IMR-90 (cell line): ENCODE measurements at regions of chr13 and their contacts with region 1.

Region 1: GRCh38 chr13:60396783-60397703 is at the start of gene TDRD3:
- DNase-seq: peak; percentile 82
- ATAC-seq: peak; percentile 65
- H3K4me3 ChIP-seq: peak within 1 kb of the TSS; percentile 81
- H3K27ac ChIP-seq: peak within 1 kb of the TSS; percentile 99
- H3K4me1 ChIP-seq: peaks cover 5% of the 10 kb centered on the region; the same call in 1 of the 2 replicates
- H3K27me3 ChIP-seq: no peaks in the 10 kb centered on the region
- CTCF ChIP-seq: peak; percentile 70
- POLR2A ChIP-seq: no peak
- RAD21 ChIP-seq: 0 out of 2 replicates have a peak, but pooled peaks have one; percentile 7
- total RNA-seq, gene TDRD3: 12.0 and 14.7 TPM in 2 replicates

Region 2: DNA sequence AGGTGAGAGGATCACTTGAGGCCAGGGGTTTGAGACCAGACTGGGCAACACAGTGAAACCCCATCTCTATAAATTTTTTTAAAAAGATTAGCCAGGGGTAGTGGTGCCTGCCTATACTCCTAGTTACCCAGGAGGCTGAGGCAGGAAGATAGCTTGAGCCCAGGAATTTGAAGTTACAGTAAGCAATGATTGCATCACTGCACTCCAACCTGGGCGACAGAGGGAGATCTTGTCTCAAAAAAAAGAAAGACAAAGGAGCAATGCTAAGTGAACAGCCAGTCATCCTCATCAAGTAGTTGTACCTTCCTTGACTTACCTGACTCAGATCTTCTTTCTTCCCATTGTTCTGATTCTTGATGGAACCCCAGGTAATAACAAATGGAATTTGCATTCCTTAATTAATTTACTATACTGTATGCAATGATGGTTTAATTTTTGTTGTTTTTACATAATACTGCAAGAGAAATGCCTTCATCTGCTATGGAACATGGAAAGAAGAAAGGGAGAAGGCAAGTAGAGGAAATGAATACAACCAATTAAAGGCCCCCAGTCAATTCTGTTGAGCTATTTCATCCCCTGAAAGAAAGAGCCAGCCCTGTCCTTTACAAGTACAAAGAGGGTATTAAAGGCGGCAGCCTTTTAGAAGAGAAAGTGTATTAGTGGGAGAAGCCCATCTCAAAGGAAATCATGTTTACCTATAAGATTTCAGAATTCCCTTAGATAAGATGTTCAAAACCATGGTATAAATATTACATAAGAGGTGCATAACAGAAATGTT is 550.0 kb before region 1 on chr13:
- CTCF ChIA-PET with region 1: no interaction called
- POLR2A ChIA-PET with region 1: interaction called, 12 read pairs
- dilution Hi-C with region 1: no loop called
- in situ Hi-C with region 1: no loop called
- intact Hi-C with region 1: no loop called
- DNase-seq: no peak
- ATAC-seq: no peak
- H3K4me3 ChIP-seq: no peak overlapping the region
- H3K27ac ChIP-seq: no peak overlapping the region
- H3K4me1 ChIP-seq: 0 out of 2 replicates have a peak, but pooled peaks cover 3% of the 10 kb centered on the region
- H3K27me3 ChIP-seq: no peaks in the 10 kb centered on the region
- CTCF ChIP-seq: no peak
- POLR2A ChIP-seq: no peak
- RAD21 ChIP-seq: no peak

Region 3: GRCh38 chr13:59924256-59924655 is 472.8 kb before region 1 on chr13:
- CTCF ChIA-PET with region 1: no interaction called
- POLR2A ChIA-PET with region 1: no interaction called
- dilution Hi-C with region 1: no loop called
- in situ Hi-C with region 1: no loop called
- intact Hi-C with region 1: loop called (anchors 10 kb)
- DNase-seq: no peak
- ATAC-seq: no peak
- H3K4me3 ChIP-seq: no peak overlapping the region
- H3K27ac ChIP-seq: no peak overlapping the region
- H3K4me1 ChIP-seq: no peaks in the 10 kb centered on the region
- H3K27me3 ChIP-seq: no peaks in the 10 kb centered on the region
- CTCF ChIP-seq: no peak
- POLR2A ChIP-seq: no peak
- RAD21 ChIP-seq: no peak

Region 4: GRCh38 chr13:60095300-60095699 is 301.7 kb before region 1 on chr13:
- CTCF ChIA-PET with region 1: no interaction called
- POLR2A ChIA-PET with region 1: no interaction called
- dilution Hi-C with region 1: no loop called
- in situ Hi-C with region 1: no loop called
- intact Hi-C with region 1: no loop called
- DNase-seq: no peak
- ATAC-seq: no peak
- H3K4me3 ChIP-seq: no peak overlapping the region
- H3K27ac ChIP-seq: no peak overlapping the region
- H3K4me1 ChIP-seq: peaks cover 7% of the 10 kb centered on the region
- H3K27me3 ChIP-seq: no peaks in the 10 kb centered on the region
- CTCF ChIP-seq: no peak
- POLR2A ChIP-seq: no peak
- RAD21 ChIP-seq: no peak

Region 5: DNA sequence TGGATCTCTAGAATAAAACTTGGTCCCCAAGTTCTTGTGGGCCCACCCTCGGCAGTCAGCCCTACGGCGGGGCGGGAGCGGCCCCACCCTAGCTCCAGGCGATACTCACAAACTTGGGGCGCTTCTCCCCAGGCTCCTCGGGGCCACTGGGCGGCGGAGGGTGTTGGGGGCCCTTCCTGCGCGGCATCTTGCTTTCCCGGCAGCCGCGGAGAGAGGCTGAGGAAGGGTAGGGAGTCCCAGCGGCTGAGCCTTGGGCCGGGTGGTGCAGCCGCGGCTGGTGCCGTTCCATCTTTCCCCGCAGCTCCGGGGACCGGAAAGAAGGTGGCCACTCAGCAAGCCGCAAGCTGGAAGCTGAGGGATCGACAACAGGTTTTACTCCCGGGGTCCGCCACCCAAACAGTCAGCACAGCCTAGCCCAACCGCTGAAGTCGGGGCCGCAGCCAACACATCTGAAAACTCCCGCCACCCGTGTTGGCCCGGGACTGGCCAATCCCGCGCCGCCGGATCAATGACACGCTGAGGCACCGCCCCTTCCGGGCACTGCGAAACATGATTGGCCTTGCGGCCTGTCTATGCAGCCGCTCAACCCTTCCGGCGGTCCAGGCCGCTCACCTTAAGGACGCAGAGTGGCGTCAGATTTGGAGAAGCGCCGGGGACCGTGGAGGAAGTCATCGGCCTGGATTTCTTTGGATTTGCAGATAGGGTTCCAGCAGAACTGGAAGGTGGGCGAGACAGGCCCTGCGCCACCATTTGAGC is 233.4 kb before region 1 on chr13 and contains the start of gene DIAPH3:
- CTCF ChIA-PET with region 1: no interaction called
- POLR2A ChIA-PET with region 1: no interaction called
- dilution Hi-C with region 1: no loop called
- in situ Hi-C with region 1: no loop called
- intact Hi-C with region 1: loop called (anchors 2 kb)
- DNase-seq: peak; percentile 95
- ATAC-seq: peak; percentile 99
- H3K4me3 ChIP-seq: peak within 1 kb of the TSS; percentile 64
- H3K27ac ChIP-seq: peak within 1 kb of the TSS; percentile 95
- H3K4me1 ChIP-seq: peaks cover 4% of the 10 kb centered on the region; the same call in 1 of the 2 replicates
- H3K27me3 ChIP-seq: no peaks in the 10 kb centered on the region
- CTCF ChIP-seq: no peak
- POLR2A ChIP-seq: peak; percentile 80
- RAD21 ChIP-seq: no peak
- total RNA-seq, gene DIAPH3: 9.3 and 16.1 TPM in 2 replicates

Region 6: DNA sequence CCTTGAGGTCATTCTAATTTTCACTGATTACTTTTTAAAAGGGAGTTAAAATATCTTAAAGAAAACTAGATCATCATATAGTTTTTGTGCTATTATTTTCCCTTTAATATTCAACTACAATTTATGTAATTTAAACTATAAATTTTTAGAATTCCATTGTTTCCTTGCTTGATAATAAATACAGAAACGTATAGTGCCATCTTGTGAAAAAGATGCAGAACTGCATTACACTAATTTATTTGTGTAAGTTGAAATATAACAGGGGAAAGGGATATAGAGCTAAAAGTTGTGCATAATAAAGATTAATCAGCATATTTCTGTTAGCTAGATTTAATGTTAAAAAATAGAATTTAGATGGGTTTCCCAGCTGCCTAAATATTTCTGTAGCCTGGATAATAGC is 61.5 kb before region 1 on chr13:
- CTCF ChIA-PET with region 1: no interaction called
- POLR2A ChIA-PET with region 1: no interaction called
- dilution Hi-C with region 1: no loop called
- in situ Hi-C with region 1: no loop called
- intact Hi-C with region 1: loop called (anchors 5 kb)
- DNase-seq: peak; percentile 22
- ATAC-seq: peak; percentile 67
- H3K4me3 ChIP-seq: no peak overlapping the region
- H3K27ac ChIP-seq: no peak overlapping the region
- H3K4me1 ChIP-seq: no peaks in the 10 kb centered on the region
- H3K27me3 ChIP-seq: peaks cover 2% of the 10 kb centered on the region
- CTCF ChIP-seq: peak; percentile 69
- POLR2A ChIP-seq: no peak
- RAD21 ChIP-seq: peak; percentile 59

Region 7: GRCh38 chr13:60363288-60363687 is 33.8 kb before region 1 on chr13:
- CTCF ChIA-PET with region 1: no interaction called
- POLR2A ChIA-PET with region 1: no interaction called
- dilution Hi-C with region 1: no loop called
- in situ Hi-C with region 1: no loop called
- intact Hi-C with region 1: no loop called
- DNase-seq: no peak
- ATAC-seq: no peak
- H3K4me3 ChIP-seq: no peak overlapping the region
- H3K27ac ChIP-seq: no peak overlapping the region
- H3K4me1 ChIP-seq: no peaks in the 10 kb centered on the region
- H3K27me3 ChIP-seq: no peaks in the 10 kb centered on the region; the same call in 1 of the 2 replicates
- CTCF ChIP-seq: no peak
- POLR2A ChIP-seq: no peak
- RAD21 ChIP-seq: no peak

Region 8: DNA sequence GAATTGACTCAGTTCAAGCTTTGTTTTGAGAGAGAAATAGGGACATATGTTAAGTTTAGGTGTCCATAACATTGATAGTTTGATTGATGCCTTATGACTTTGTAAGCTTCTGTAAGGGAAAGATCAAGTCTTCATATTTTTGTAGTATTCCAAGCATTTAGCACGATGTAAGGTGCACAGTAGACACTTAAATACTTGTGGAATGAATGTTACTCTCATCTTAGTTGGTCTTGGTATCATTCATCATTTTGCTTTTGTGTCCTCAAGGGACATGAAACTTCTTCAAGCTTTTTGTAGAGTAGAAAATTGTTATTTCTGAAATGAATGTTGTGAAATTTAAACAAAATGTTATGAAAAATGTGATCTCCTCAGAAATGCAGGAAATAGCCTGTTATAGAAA is 10.1 kb after region 1 on chr13:
- CTCF ChIA-PET with region 1: interaction called, 3 read pairs
- POLR2A ChIA-PET with region 1: no interaction called
- dilution Hi-C with region 1: no loop called
- in situ Hi-C with region 1: no loop called
- intact Hi-C with region 1: loop called (anchors 1 kb)
- DNase-seq: no peak
- ATAC-seq: no peak
- H3K4me3 ChIP-seq: no peak overlapping the region
- H3K27ac ChIP-seq: no peak overlapping the region
- H3K4me1 ChIP-seq: no peaks in the 10 kb centered on the region
- H3K27me3 ChIP-seq: no peaks in the 10 kb centered on the region
- CTCF ChIP-seq: no peak
- POLR2A ChIP-seq: no peak
- RAD21 ChIP-seq: no peak

Region 9: GRCh38 chr13:60431108-60431700 is 34.2 kb after region 1 on chr13:
- CTCF ChIA-PET with region 1: interaction called, 7 read pairs
- POLR2A ChIA-PET with region 1: no interaction called
- dilution Hi-C with region 1: no loop called
- in situ Hi-C with region 1: no loop called
- intact Hi-C with region 1: loop called (anchors 5 kb)
- DNase-seq: peak; percentile 72
- ATAC-seq: peak; percentile 95
- H3K4me3 ChIP-seq: no peak overlapping the region
- H3K27ac ChIP-seq: no peak overlapping the region
- H3K4me1 ChIP-seq: no peaks in the 10 kb centered on the region
- H3K27me3 ChIP-seq: no peaks in the 10 kb centered on the region
- CTCF ChIP-seq: peak; percentile 94
- POLR2A ChIP-seq: no peak
- RAD21 ChIP-seq: peak; percentile 83

Region 10: DNA sequence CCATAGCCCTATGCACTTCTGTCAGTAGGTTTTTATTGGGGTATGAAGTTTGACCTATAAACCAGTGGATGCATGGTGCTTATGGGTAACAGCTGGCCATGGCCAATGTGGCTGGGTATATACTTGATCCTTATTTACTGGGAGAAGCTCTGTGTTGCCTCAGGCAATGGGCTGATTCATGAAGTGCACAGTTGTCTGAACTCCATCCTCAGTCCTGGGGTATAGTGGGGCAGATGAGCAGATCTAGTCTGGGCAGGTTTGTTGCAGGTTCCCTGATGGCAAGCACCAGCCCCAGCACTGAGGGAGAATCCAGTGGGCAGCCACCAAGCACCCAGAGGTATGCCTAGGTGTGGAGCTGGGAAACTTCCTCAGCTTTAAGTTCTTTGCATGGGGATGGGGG is 274.3 kb after region 1 on chr13:
- CTCF ChIA-PET with region 1: no interaction called
- POLR2A ChIA-PET with region 1: no interaction called
- dilution Hi-C with region 1: no loop called
- in situ Hi-C with region 1: no loop called
- intact Hi-C with region 1: no loop called
- DNase-seq: no peak
- ATAC-seq: no peak
- H3K4me3 ChIP-seq: no peak overlapping the region
- H3K27ac ChIP-seq: no peak overlapping the region
- H3K4me1 ChIP-seq: no peaks in the 10 kb centered on the region
- H3K27me3 ChIP-seq: no peaks in the 10 kb centered on the region
- CTCF ChIP-seq: no peak
- POLR2A ChIP-seq: no peak
- RAD21 ChIP-seq: no peak

Region 11: DNA sequence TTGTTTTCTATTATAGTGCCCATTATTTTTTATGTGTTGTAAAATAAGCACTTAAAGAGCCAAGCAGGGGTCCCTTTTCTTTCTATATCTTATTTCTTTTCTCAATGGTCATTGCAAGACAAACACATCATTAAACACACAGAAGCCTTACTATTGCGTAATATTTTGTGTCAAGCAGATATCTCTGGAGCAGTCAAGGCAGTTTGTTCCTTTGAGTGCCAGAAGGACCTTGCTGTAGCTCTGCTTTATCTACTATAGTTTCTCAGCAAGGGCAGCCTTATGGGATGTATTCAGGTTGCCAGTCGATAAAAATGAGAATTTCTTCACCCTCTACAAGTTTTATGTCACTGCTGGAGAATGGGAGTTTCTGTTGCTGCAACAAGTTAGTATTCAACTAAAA is 319.3 kb after region 1 on chr13:
- CTCF ChIA-PET with region 1: no interaction called
- POLR2A ChIA-PET with region 1: no interaction called
- dilution Hi-C with region 1: no loop called
- in situ Hi-C with region 1: no loop called
- intact Hi-C with region 1: no loop called
- DNase-seq: no peak
- ATAC-seq: no peak
- H3K4me3 ChIP-seq: no peak overlapping the region
- H3K27ac ChIP-seq: no peak overlapping the region
- H3K4me1 ChIP-seq: no peaks in the 10 kb centered on the region
- H3K27me3 ChIP-seq: no peaks in the 10 kb centered on the region
- CTCF ChIP-seq: no peak
- POLR2A ChIP-seq: no peak
- RAD21 ChIP-seq: no peak